ENCODE measurements at regions of chr22 and their contacts with region 1.

Region 1: GRCh38 chr22:30634471-30635233 is 929 bp upstream of the SLC35E4 start:
- DNase-seq: peak; percentile 24
- H3K4me3 ChIP-seq: peak overlapping the region; percentile 43 to 78 (median 52)
- H3K27ac ChIP-seq: peak overlapping the region; percentile 76 to 98 (median 93)
- H3K4me1 ChIP-seq: peaks cover 29 to 48% (median 30%) of the 10 kb centered on the region in 3 donors
- H3K27me3 ChIP-seq: no peaks in the 10 kb centered on the region
- CTCF ChIP-seq: peak; percentile 93 to 98 (median 98)
- POLR2A ChIP-seq: no peak

Region 2: GRCh38 chr22:30754971-30755756 is 120.5 kb after region 1 on chr22:
- intact Hi-C with region 1: loop called (anchors 2 kb)
- DNase-seq: no peak
- H3K4me3 ChIP-seq: no peak overlapping the region
- H3K27ac ChIP-seq: no peak overlapping the region
- H3K4me1 ChIP-seq: no peaks in the 10 kb centered on the region
- H3K27me3 ChIP-seq: no peaks in the 10 kb centered on the region
- CTCF ChIP-seq: peak in 5 of 6 experiments; percentile 58 to 80 (median 69)
- POLR2A ChIP-seq: no peak

Region 3: DNA sequence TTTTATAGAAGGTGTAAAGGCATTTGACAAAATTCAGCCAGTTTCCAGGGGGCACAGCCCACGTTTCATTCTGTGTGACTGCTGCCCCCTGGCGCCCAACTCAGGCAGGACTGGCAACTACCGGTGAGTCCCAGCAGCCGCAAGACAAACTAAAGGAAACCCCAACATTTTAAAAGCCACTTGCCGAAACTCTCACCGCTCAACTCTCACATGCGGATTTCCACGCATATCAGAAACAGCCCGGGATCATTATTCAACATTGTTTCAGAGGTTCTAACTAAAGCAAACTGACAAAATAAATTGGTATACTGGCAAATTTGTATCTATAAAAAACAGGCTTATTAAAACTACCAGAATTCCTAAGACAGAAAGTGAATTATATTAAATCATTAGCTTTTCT is 285.8 kb after region 1 on chr22:
- intact Hi-C with region 1: loop called (anchors 10 kb)
- DNase-seq: no peak
- H3K4me3 ChIP-seq: peak overlapping the region in 1 of 4 donors; percentile 22
- H3K27ac ChIP-seq: no peak overlapping the region
- H3K4me1 ChIP-seq: peaks cover 0 to 21% (median 10%) of the 10 kb centered on the region in 3 donors
- H3K27me3 ChIP-seq: no peaks in the 10 kb centered on the region
- CTCF ChIP-seq: peak; percentile 79 to 94 (median 92)
- POLR2A ChIP-seq: no peak